ENCODE measurements at regions of chr1 and their contacts with region 1.

Region 1: GRCh38 chr1:42035830-42036604 is 117.2 kb upstream of the GUCA2B start:
- DNase-seq: peak; percentile 97 to 99 (median 98)
- ATAC-seq: peak; percentile 97 to 99 (median 98)
- H3K4me3 ChIP-seq: peak overlapping the region; percentile 11 to 100 (median 90)
- H3K27ac ChIP-seq: peak overlapping the region; percentile 50 to 88 (median 78)
- H3K4me1 ChIP-seq: peaks cover 0 to 20% (median 9%) of the 10 kb centered on the region in 12 donors
- H3K27me3 ChIP-seq: no peaks in the 10 kb centered on the region
- CTCF ChIP-seq: peak in 1 of 12 donors; percentile 1
- POLR2A ChIP-seq: peak in 1 of 2 donors; percentile 37

Region 2: DNA sequence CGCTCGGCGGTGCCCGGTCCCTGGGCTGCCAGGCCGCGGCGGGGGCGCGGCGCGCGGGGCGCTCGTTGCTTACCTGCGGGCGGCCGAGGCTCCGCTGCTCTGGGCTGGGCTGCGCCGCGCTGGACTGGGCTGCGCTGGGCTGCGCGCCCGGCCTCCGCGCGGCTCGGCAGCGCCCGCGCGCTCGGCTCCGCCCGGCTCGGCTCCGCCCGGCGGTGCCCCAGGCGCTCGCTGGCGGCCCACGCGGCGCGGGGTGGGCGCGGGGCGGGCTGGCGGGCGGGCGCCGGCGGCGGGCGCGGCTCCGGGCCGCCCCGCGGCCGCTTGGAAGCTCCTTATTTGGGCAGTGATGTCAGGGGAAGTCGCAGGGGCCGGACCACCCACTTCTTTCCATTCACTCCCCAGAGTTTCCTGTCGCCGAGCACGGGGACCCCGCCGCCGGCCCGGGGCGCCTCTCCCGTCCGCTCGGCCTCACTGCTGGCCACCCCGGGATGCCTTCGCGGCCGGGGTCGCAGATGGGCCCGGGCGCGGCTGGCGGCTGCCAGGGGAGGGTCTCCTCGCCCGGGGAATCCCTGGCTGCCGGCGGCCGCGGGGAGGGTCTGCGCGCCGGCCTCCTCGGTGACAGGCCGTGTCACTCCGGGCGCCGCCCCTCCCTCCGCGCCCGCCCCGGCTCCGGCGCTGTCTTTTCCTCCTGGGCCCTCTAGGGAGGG is 373.8 kb before region 1 on chr1:
- intact Hi-C with region 1: loop called in 1 of 10 experiments (anchors 10 kb)
- DNase-seq: peak; percentile 76 to 87 (median 83)
- ATAC-seq: peak; percentile 36 to 81 (median 80)
- H3K4me3 ChIP-seq: peak overlapping the region; percentile 47 to 94 (median 70)
- H3K27ac ChIP-seq: peak overlapping the region; percentile 25 to 97 (median 92)
- H3K4me1 ChIP-seq: peaks cover 0 to 66% (median 18%) of the 10 kb centered on the region in 12 donors
- H3K27me3 ChIP-seq: no peaks in the 10 kb centered on the region
- CTCF ChIP-seq: no peak
- POLR2A ChIP-seq: peak; percentile 8 to 78

Region 3: GRCh38 chr1:41819069-41819468 is 216.9 kb before region 1 on chr1:
- intact Hi-C with region 1: loop called (anchors 5 to 10 kb)
- DNase-seq: no peak
- ATAC-seq: no peak
- H3K4me3 ChIP-seq: no peak overlapping the region
- H3K27ac ChIP-seq: no peak overlapping the region
- H3K4me1 ChIP-seq: peaks cover 0 to 22% (median 14%) of the 10 kb centered on the region in 12 donors
- H3K27me3 ChIP-seq: no peaks in the 10 kb centered on the region
- CTCF ChIP-seq: no peak
- POLR2A ChIP-seq: no peak

Region 4: DNA sequence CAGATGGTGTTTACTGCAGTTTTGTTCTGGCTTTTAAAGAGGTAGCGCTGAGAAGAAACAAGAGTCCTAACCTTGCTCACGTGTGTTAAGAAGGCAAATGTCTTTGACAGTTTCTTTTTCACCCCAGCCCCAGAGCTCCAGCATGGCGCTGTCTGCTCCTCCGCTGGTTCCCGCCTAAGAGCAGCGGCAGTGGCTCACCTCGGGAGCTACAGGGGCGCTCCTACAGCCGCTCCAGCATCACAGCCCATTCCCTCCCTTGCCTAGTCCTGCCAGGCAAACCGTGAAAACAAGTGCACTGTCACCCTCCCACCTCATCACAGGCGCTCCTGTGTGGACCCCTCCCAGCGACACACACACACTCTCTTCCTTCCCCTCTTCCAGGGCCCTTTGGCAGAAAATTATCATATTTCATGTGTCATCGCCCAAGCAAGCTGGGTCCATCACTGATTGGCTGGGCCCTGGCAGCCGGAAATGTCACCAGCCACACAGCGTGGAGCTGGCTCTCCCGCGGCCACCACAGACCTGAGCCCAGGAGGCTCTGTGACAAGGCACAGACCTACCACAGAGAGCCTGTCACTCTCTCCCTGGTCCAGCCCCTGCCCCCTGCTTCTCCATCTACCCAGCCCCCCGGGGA is 116.1 kb before region 1 on chr1:
- intact Hi-C with region 1: loop called in 2 of 10 experiments (anchors 2 to 10 kb)
- DNase-seq: peak; percentile 40 to 85 (median 62)
- ATAC-seq: peak; percentile 71 to 87 (median 84)
- H3K4me3 ChIP-seq: peak overlapping the region in 9 of 12 donors; percentile 24 to 48 (median 31)
- H3K27ac ChIP-seq: peak overlapping the region in 5 of 12 donors; percentile 25 to 40 (median 36)
- H3K4me1 ChIP-seq: peaks cover 3 to 48% (median 29%) of the 10 kb centered on the region in 12 donors
- H3K27me3 ChIP-seq: peaks cover 0 to 15% (median 0%) of the 10 kb centered on the region in 9 donors
- CTCF ChIP-seq: no peak
- POLR2A ChIP-seq: peak in 1 of 2 donors; percentile 19

Region 5: DNA sequence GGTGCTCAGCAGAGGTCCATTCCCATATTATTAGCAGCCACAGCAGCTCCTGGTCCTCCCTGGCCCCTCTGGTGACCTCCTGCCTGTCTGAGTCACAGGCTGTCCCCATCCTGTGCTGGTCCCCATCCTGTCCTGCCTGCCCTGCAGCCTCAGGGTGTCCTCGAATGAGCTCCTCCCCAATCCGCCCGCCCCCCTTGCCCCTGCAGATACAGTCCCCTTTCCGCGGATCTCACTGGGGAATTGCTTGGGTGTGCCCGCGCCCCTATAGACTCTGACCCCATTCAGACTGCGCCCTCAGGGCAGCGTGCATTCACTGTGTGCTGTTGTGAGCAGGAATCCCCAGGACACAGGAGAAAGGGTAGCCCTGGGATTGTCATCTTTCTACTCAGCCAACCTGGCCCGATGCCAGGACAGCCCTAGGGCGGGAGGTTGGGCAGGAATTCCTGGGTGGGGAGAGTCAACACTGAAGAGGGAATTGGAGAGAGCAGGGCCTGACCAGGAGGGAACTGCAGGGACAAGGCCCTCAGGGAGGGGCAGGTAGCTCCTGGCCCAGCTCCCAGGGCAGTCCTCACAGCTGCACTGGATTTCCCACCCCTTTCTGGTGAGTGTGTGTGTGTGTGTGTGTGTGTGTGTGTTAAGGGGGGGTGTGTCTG is 129.6 kb after region 1 on chr1:
- intact Hi-C with region 1: no loop called
- DNase-seq: peak; percentile 69 to 82 (median 79)
- ATAC-seq: peak; percentile 81 to 92 (median 87)
- H3K4me3 ChIP-seq: no peak overlapping the region
- H3K27ac ChIP-seq: peak overlapping the region in 10 of 12 donors; percentile 38 to 79 (median 62)
- H3K4me1 ChIP-seq: peaks cover 0 to 27% (median 14%) of the 10 kb centered on the region in 12 donors
- H3K27me3 ChIP-seq: no peaks in the 10 kb centered on the region
- CTCF ChIP-seq: no peak
- POLR2A ChIP-seq: no peak

Region 6: GRCh38 chr1:42529724-42530181 is 493.7 kb after region 1 on chr1:
- intact Hi-C with region 1: no loop called
- DNase-seq: no peak
- ATAC-seq: no peak
- H3K4me3 ChIP-seq: peak overlapping the region in 3 of 12 donors; percentile 9 to 35 (median 34)
- H3K27ac ChIP-seq: no peak overlapping the region
- H3K4me1 ChIP-seq: peaks cover 0 to 10% (median 0%) of the 10 kb centered on the region in 12 donors
- H3K27me3 ChIP-seq: no peaks in the 10 kb centered on the region
- CTCF ChIP-seq: no peak
- POLR2A ChIP-seq: no peak